Activated CD4-positive, alpha-beta T cell treated with anti-CD3 and anti-CD28 coated beads for 36 hours (primary cell): ENCODE measurements at regions of chr14 and their contacts with region 1.

Region 1: DNA sequence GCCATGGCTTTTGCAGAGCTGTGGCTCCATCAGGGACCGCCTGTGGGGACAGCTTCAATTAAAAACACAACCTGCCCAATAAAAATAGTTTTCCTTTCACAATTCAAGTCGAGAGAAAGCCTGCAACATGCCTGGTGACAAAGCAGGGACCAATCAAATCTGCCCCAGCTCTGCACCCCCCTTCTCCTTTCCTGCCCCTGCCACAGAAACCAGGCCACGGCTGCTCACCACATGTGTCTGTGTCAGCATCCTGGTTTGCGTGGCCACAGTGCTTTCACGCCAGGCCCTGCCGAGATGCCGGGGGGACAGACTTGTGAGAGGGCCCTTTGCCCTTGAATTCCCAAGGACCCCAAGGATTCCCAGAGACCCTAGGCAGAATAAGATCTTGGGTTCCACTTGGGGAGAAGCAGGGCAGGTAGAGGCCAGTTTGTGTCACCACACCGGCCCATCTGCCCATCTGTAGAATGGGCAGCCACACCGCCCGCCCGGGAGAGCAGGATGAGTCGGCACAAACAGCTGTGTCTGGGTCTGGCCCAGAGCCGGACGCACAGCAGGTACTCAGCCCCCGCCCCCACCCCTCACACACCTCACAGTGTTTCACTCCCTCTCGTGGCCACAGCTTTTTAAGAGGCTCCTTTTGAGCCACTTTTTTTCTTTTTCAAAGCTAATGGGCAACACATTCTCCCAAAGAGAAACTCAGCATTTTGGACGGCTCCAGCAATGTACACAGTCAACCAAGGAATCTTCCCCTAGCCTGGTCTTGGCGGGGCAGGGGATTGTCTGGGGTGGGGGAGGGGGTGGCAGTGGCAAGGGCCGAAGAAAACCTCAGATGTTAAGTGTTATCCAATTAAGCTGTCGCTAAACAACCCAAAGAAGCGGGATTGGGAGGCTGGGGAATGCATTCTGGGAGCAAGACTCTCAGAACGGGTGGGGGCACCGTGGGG is 41.5 kb downstream of the BCL11B start:
- DNase-seq: peak; percentile 91
- ATAC-seq: peak; percentile 55
- H3K4me3 Mint-ChIP-seq: peak overlapping the region; percentile 67
- H3K27ac Mint-ChIP-seq: peak overlapping the region; percentile 88
- H3K4me1 Mint-ChIP-seq: peaks cover 93% of the 10 kb centered on the region
- H3K27me3 Mint-ChIP-seq: no peaks in the 10 kb centered on the region

Region 2: GRCh38 chr14:99186956-99187690 is 43.4 kb before region 1 on chr14:
- CTCF ChIA-PET with region 1: interaction called, 4 read pairs
- POLR2A ChIA-PET with region 1: interaction called, 3 read pairs
- intact Hi-C with region 1: loop called (anchors 1 to 2 kb)
- DNase-seq: peak; percentile 33
- ATAC-seq: no peak
- H3K4me3 Mint-ChIP-seq: peak overlapping the region; percentile 67
- H3K27ac Mint-ChIP-seq: peak overlapping the region; percentile 96
- H3K4me1 Mint-ChIP-seq: peaks cover 91% of the 10 kb centered on the region
- H3K27me3 Mint-ChIP-seq: no peaks in the 10 kb centered on the region

Region 3: DNA sequence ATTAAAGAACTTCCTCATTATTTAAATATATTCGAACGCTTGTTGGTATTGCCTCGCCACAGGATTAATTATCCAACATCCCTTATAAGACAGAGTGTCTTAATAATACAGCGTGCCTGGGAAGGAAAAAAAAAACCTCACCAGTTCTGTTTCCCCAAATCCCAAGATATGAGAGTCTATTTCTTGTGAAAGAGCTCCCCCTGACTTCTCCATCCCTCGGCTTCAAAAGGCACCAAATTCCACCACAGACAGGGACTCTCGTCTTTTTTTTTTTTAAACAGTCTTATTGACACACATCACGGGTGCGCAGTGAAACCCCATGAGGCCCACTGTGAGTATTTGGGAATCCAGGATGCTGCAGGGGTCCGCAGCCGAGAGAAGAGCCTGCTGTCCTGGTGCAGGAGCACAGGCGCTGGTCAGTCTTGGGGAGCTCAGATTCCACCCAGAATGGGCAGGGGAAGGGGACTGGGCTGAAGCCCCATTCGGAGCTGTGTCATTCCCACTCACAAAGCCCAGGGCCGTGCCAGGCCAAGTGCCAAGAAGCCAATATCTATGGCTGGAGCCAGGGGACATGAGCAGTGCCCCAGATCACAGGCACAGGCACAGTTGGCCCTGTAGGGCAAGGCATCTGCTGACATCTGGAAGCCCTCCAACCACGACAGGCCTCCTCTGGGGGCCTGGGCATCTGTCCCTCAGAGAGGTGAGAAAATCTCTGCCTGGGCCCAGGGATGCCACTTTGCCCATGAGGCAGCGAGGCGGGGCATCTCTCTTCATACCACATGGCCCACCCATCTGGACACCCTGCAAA is 30.4 kb before region 1 on chr14:
- CTCF ChIA-PET with region 1: interaction called, 7 read pairs
- POLR2A ChIA-PET with region 1: interaction called, 4 read pairs
- intact Hi-C with region 1: loop called in 1 of 2 experiments (anchors 2 kb)
- DNase-seq: no peak
- ATAC-seq: no peak
- H3K4me3 Mint-ChIP-seq: peak overlapping the region; percentile 44
- H3K27ac Mint-ChIP-seq: peak overlapping the region; percentile 99
- H3K4me1 Mint-ChIP-seq: peaks cover 100% of the 10 kb centered on the region
- H3K27me3 Mint-ChIP-seq: no peaks in the 10 kb centered on the region

Region 4: DNA sequence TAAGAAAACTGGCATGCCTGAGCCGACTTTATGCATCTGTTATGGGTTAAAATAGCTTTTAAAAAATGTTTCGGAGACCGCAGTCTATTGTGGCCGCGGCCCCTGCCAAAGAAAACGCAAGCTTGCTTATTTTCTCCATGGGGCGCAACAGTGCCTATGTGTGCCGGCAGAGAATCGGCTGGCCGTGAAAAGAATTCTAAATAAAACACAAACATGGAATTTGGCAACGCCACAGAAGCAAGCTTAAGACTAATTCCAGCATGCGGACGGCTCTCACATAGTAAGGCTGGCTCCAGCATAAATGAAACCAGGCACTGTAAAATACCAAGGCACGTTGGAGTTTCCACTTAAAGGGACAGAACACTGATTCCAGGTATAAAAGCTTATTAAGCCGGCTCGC is 15.2 kb before region 1 on chr14:
- CTCF ChIA-PET with region 1: interaction called, 14 read pairs
- POLR2A ChIA-PET with region 1: interaction called, 5 read pairs
- intact Hi-C with region 1: loop called (anchors 2 kb)
- DNase-seq: no peak
- ATAC-seq: no peak
- H3K4me3 Mint-ChIP-seq: peak overlapping the region; percentile 57
- H3K27ac Mint-ChIP-seq: peak overlapping the region; percentile 79
- H3K4me1 Mint-ChIP-seq: peaks cover 95% of the 10 kb centered on the region
- H3K27me3 Mint-ChIP-seq: no peaks in the 10 kb centered on the region

Region 5: GRCh38 chr14:99245564-99246511 is 15.4 kb after region 1 on chr14:
- CTCF ChIA-PET with region 1: interaction called, 13 read pairs
- POLR2A ChIA-PET with region 1: interaction called, 9 read pairs
- intact Hi-C with region 1: loop called in 1 of 2 experiments (anchors 1 kb)
- DNase-seq: peak; percentile 60
- ATAC-seq: no peak
- H3K4me3 Mint-ChIP-seq: peak overlapping the region; percentile 67
- H3K27ac Mint-ChIP-seq: peak overlapping the region; percentile 93
- H3K4me1 Mint-ChIP-seq: peaks cover 81% of the 10 kb centered on the region
- H3K27me3 Mint-ChIP-seq: no peaks in the 10 kb centered on the region